Colonic mucosa (tissue), 4 donors: ENCODE measurements at regions of chr1 and their contacts with region 1.

Region 1: DNA sequence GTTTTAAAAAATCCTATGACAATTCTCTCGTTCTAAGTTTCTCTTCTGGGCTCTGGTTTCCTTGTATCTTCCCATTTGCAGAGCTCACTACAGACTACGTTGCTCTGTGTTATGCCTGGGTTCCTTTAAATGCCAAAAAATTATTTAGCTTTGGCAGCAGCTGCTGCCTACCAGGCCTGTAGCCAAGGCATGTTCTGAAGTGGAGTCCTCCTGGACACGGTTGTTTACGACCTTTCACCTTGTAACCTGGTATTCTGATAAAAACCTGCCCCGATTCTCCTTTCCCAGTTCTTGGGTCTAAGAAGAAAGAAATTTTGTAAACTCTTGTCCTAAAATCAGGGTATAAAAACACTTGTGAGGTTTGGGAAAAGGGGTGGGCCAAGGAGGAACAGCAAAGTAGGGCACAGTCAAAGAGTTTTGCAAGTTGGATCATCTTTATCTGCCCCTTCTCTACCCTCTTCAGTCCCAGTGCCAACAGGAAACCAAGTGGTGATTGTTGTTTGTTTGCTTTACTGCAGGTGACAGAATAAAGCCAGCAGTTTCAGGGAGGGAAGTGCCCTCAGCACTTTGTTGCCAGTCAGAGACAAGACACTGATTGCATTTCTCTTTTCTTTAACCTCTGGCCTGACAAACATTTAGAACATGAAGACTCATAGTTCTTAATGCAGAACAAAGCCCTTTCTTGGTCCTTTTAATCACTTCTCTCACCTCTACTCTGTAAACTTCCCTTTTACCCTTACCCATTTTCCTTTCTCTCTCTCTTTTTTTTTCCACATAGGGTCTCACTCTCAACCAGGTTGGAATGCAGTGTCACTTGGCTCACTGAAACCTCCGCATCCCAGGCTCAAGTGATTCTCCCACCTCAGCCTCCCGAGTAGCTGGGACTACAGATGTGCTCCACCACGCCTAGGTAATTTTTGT is 3.2 kb upstream of the TXNIP start:
- DNase-seq: no peak
- H3K4me3 ChIP-seq: no peak overlapping the region
- H3K27ac ChIP-seq: peak overlapping the region; percentile 94
- H3K4me1 ChIP-seq: peaks cover 11% of the 10 kb centered on the region
- H3K27me3 ChIP-seq: no peaks in the 10 kb centered on the region
- CTCF ChIP-seq: no peak

Region 2: GRCh38 chr1:145885738-145886287 is 113.8 kb before region 1 on chr1 and contains the start of gene ANKRD35:
- intact Hi-C with region 1: no loop called
- DNase-seq: peak; percentile 88
- H3K4me3 ChIP-seq: peak within 1 kb of the TSS; percentile 74
- H3K27ac ChIP-seq: no peak within 1 kb of the TSS
- H3K4me1 ChIP-seq: peaks cover under 1% of the 10 kb centered on the region
- H3K27me3 ChIP-seq: peaks cover 4% of the 10 kb centered on the region
- CTCF ChIP-seq: no peak
- total RNA-seq, gene ANKRD35: 0.53 to 0.59 TPM

Region 3: DNA sequence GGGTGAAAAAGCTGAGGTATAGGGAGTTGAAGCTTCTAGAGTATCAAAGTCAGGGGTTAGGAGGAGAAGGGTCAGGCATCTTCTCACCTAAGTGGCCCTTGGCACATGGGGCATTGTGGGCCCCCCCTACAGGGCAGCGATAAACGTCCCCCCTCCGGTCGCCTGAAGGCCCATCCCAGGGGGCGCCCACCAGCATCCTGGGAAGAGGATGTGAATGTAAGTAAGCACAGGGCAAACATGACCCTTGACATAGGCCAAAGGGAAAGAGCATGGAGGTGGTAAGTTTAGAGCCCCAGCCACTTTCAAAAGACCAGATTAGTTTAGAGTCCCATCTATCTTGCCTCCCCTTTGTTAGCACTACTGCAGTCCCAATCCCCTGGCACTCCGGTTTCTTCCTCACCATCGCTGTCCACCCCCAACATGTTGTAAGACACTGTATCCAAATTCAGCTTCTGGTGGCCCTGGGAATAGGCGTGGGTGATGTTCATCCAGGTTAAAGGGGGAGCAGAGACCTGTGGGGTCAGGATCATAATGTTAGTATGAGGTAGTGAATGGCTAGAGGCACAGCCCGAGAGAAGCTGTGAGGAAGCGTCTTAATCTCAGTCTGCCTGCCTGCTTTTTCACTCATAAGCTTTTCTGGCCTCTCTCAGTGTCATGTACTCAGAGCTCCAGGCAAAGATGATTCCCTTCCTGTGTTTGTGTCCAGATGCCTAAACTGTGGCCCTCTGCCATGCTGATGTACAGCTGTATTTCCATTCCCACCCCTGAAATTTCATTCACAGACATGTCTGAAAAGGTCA is 92.4 kb before region 1 on chr1:
- intact Hi-C with region 1: no loop called
- DNase-seq: no peak
- H3K4me3 ChIP-seq: no peak overlapping the region
- H3K27ac ChIP-seq: no peak overlapping the region
- H3K4me1 ChIP-seq: no peaks in the 10 kb centered on the region
- H3K27me3 ChIP-seq: no peaks in the 10 kb centered on the region
- CTCF ChIP-seq: no peak

Region 4: GRCh38 chr1:145977486-145978470 is 21.8 kb before region 1 on chr1:
- intact Hi-C with region 1: loop called (anchors 2 kb)
- DNase-seq: peak; percentile 76
- H3K4me3 ChIP-seq: no peak overlapping the region
- H3K27ac ChIP-seq: peak overlapping the region; percentile 99
- H3K4me1 ChIP-seq: peaks cover 25% of the 10 kb centered on the region
- H3K27me3 ChIP-seq: no peaks in the 10 kb centered on the region
- CTCF ChIP-seq: peak; percentile 70